ENCODE measurements at regions of chr5 and their contacts with region 1.

Region 1: DNA sequence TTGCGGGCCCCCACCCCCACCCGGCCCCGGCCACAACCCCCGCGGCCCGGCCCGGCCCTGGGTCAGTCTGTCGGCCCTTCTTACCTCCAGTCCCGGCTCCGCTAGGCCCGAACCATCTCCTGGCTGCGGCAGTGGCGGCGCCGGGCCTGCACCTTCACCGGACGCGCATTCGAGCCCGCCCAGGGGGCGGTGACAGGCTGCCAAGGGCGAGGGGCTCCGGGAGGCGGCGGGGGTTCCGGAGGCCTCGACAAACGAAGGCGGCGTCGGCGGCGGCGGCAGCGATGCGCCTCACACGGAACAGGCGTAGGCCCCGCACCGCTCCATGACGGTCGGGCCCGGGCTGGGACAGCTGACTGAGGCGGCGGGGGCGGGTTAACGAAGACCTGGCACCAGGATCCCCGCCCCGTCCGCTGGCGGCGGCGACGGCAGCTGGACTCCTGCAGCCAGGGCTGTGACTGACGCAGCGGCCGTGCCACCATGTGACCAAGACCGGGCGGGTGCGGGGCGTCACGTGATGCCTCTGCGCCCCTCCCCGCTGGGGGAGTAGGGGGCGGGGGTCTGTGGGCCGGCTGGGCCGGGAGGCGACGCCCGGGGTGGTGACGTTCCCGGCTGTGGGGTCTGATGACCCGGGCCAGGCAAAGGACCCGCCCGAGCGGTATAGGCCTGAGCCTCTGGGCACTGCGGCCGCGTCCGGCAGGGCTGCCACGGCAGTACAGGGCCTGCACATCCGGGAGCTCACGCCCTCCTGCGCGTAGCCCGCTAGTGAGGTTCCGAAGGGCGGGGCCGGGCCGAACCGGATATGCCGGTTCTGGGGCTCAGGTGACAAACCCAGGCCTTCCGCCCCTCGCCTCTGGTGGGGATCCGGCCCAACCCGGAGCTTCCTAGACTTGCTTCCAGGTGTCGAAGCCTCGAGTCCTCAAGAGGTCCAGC is at the start of gene AFF4:
- DNase-seq: peak; percentile 97
- H3K4me3 ChIP-seq: peak within 1 kb of the TSS; percentile 83 to 98 (median 84)
- H3K27ac ChIP-seq: peak within 1 kb of the TSS; percentile 81
- H3K4me1 ChIP-seq: peaks cover 15% of the 10 kb centered on the region
- H3K27me3 ChIP-seq: no peaks in the 10 kb centered on the region
- CTCF ChIP-seq: no peak
- POLR2A ChIP-seq: peak; percentile 90
- total RNA-seq, gene AFF4: 85.5 and 88.3 TPM in 2 replicates

Region 2: GRCh38 chr5:132651838-132652469 is 311.5 kb before region 1 on chr5:
- CTCF ChIA-PET with region 1: no interaction called
- POLR2A ChIA-PET with region 1: no interaction called
- dilution Hi-C with region 1: no loop called
- intact Hi-C with region 1: no loop called
- DNase-seq: no peak
- H3K4me3 ChIP-seq: no peak overlapping the region
- H3K27ac ChIP-seq: no peak overlapping the region
- H3K4me1 ChIP-seq: peaks cover 9% of the 10 kb centered on the region
- H3K27me3 ChIP-seq: peaks cover 6 to 8% of the 10 kb centered on the region in 2 experiments
- CTCF ChIP-seq: no peak
- POLR2A ChIP-seq: no peak

Region 3: GRCh38 chr5:132947671-132948070 is 15.8 kb before region 1 on chr5:
- CTCF ChIA-PET with region 1: interaction called, 3 read pairs
- POLR2A ChIA-PET with region 1: interaction called, 6 read pairs
- dilution Hi-C with region 1: no loop called
- intact Hi-C with region 1: loop called (anchors 2 kb)
- DNase-seq: peak; percentile 91
- H3K4me3 ChIP-seq: no peak overlapping the region
- H3K27ac ChIP-seq: peak overlapping the region; percentile 90
- H3K4me1 ChIP-seq: peaks cover 29% of the 10 kb centered on the region
- H3K27me3 ChIP-seq: no peaks in the 10 kb centered on the region
- CTCF ChIP-seq: no peak
- POLR2A ChIP-seq: no peak

Region 4: DNA sequence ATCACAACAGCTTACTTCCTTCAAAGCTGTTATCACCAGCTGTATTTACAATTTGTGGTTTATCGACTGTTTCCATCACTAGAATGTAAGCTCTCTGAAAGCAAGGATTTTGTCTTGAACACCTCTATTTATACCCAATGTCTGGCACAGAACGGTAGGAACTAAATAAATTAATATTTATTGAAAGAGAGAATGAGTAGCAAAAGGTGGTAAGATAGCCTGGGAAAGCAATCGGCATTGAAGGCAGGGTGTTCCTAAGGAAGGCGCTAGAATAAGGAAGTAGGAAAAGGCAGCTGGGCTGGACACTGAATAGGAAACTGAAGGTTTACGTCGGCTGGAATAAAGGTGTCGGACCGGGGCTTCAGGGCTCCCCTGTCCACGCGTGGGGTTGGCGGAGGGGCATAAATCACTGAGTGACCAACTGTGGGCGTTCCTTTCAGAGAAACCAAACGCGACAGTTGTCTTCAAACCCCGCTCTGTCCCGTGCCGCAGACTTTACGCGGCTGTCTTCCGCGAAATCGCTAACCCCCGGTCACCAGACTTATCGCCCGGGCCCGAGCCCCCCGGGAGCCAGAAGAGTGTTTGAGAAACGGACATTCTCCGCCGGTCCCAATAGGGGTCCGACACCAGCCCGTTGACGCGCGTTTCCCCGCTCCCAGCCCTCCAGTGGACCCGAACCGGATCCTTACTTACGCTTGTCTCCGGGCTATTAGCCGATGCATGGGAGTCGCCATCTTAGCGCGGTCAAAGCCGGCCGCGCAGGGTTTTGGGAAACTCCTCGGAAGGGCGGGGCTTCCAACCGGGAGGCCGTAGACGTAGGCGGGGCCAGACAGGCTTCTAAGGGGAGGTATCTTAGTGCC is 62.6 kb after region 1 on chr5 and contains the start of gene ZCCHC10:
- CTCF ChIA-PET with region 1: no interaction called
- POLR2A ChIA-PET with region 1: interaction called, 3 read pairs
- dilution Hi-C with region 1: no loop called
- intact Hi-C with region 1: loop called (anchors 1 kb)
- DNase-seq: peak; percentile 96
- H3K4me3 ChIP-seq: peak within 1 kb of the TSS; percentile 55 to 86 (median 84)
- H3K27ac ChIP-seq: peak within 1 kb of the TSS; percentile 54
- H3K4me1 ChIP-seq: peaks cover 5% of the 10 kb centered on the region
- H3K27me3 ChIP-seq: no peaks in the 10 kb centered on the region
- CTCF ChIP-seq: no peak
- POLR2A ChIP-seq: peak; percentile 96
- total RNA-seq, gene ZCCHC10: 25.9 and 30.5 TPM in 2 replicates

Region 5: GRCh38 chr5:133063965-133064364 is 100.5 kb after region 1 on chr5:
- CTCF ChIA-PET with region 1: no interaction called
- POLR2A ChIA-PET with region 1: no interaction called
- dilution Hi-C with region 1: no loop called
- intact Hi-C with region 1: no loop called
- DNase-seq: no peak
- H3K4me3 ChIP-seq: no peak overlapping the region
- H3K27ac ChIP-seq: no peak overlapping the region
- H3K4me1 ChIP-seq: no peaks in the 10 kb centered on the region
- H3K27me3 ChIP-seq: no peaks in the 10 kb centered on the region
- CTCF ChIP-seq: no peak
- POLR2A ChIP-seq: no peak

Region 6: GRCh38 chr5:133240425-133241091 is 277.1 kb after region 1 on chr5:
- CTCF ChIA-PET with region 1: no interaction called
- POLR2A ChIA-PET with region 1: no interaction called
- dilution Hi-C with region 1: no loop called
- intact Hi-C with region 1: loop called (anchors 5 kb)
- DNase-seq: peak; percentile 95
- H3K4me3 ChIP-seq: no peak overlapping the region
- H3K27ac ChIP-seq: peak overlapping the region; percentile 77
- H3K4me1 ChIP-seq: peaks cover 27% of the 10 kb centered on the region
- H3K27me3 ChIP-seq: no peaks in the 10 kb centered on the region
- CTCF ChIP-seq: no peak
- POLR2A ChIP-seq: peak; percentile 49

Measured in endothelial cell of umbilical vein (primary cell).